IMR-90 (cell line): ENCODE measurements at regions of chr2 and their contacts with region 1.

Region 1: GRCh38 chr2:197705121-197705911 is at the start of gene MARS2:
- DNase-seq: peak; percentile 88
- ATAC-seq: peak; percentile 95
- H3K4me3 ChIP-seq: peak within 1 kb of the TSS; percentile 99
- H3K27ac ChIP-seq: peak within 1 kb of the TSS; percentile 49
- H3K4me1 ChIP-seq: peaks cover 6% of the 10 kb centered on the region
- H3K27me3 ChIP-seq: no peaks in the 10 kb centered on the region
- CTCF ChIP-seq: no peak
- POLR2A ChIP-seq: no peak
- RAD21 ChIP-seq: no peak
- total RNA-seq, gene MARS2: 3.8 and 3.9 TPM in 2 replicates

Region 2: GRCh38 chr2:197124639-197125390 is 580.5 kb before region 1 on chr2:
- CTCF ChIA-PET with region 1: no interaction called
- POLR2A ChIA-PET with region 1: no interaction called
- dilution Hi-C with region 1: no loop called
- in situ Hi-C with region 1: no loop called
- intact Hi-C with region 1: loop called (anchors 10 kb)
- DNase-seq: peak; percentile 92
- ATAC-seq: peak; percentile 94
- H3K4me3 ChIP-seq: no peak overlapping the region
- H3K27ac ChIP-seq: peak overlapping the region; percentile 71
- H3K4me1 ChIP-seq: peaks cover 13% of the 10 kb centered on the region
- H3K27me3 ChIP-seq: no peaks in the 10 kb centered on the region
- CTCF ChIP-seq: no peak
- POLR2A ChIP-seq: no peak
- RAD21 ChIP-seq: 0 out of 2 replicates have a peak, but pooled peaks have one; percentile 11

Region 3: GRCh38 chr2:197434541-197435513 is 270.5 kb before region 1 on chr2 and contains the start of gene SF3B1:
- CTCF ChIA-PET with region 1: no interaction called
- POLR2A ChIA-PET with region 1: no interaction called
- dilution Hi-C with region 1: no loop called
- in situ Hi-C with region 1: no loop called
- intact Hi-C with region 1: loop called (anchors 10 kb)
- DNase-seq: peak; percentile 98
- ATAC-seq: peak; percentile 94
- H3K4me3 ChIP-seq: peak within 1 kb of the TSS; percentile 90
- H3K27ac ChIP-seq: peak within 1 kb of the TSS; percentile 97
- H3K4me1 ChIP-seq: peaks cover 7% of the 10 kb centered on the region
- H3K27me3 ChIP-seq: no peaks in the 10 kb centered on the region
- CTCF ChIP-seq: no peak
- POLR2A ChIP-seq: peak; percentile 97
- RAD21 ChIP-seq: no peak
- total RNA-seq, gene SF3B1: 706 and 942 TPM in 2 replicates

Region 4: GRCh38 chr2:197499594-197500526 is 205.5 kb before region 1 on chr2 and contains the starts of genes HSPD1 and HSPE1:
- CTCF ChIA-PET with region 1: no interaction called
- POLR2A ChIA-PET with region 1: no interaction called
- dilution Hi-C with region 1: no loop called
- in situ Hi-C with region 1: no loop called
- intact Hi-C with region 1: loop called (anchors 1 kb)
- DNase-seq: peak; percentile 99
- ATAC-seq: peak; percentile 94
- H3K4me3 ChIP-seq: peak within 1 kb of the TSS; percentile 74
- H3K27ac ChIP-seq: peak within 1 kb of the TSS; percentile 74
- H3K4me1 ChIP-seq: 0 out of 2 replicates have a peak, but pooled peaks cover 1% of the 10 kb centered on the region
- H3K27me3 ChIP-seq: no peaks in the 10 kb centered on the region
- CTCF ChIP-seq: no peak
- POLR2A ChIP-seq: peak; percentile 71
- RAD21 ChIP-seq: no peak
- total RNA-seq, gene HSPD1: 171 and 374 TPM in 2 replicates
- total RNA-seq, gene HSPE1: 13.3 and 60.3 TPM in 2 replicates

Region 5: GRCh38 chr2:197515739-197516392 is 189.4 kb before region 1 on chr2 and contains the start of gene MOB4:
- CTCF ChIA-PET with region 1: no interaction called
- POLR2A ChIA-PET with region 1: no interaction called
- dilution Hi-C with region 1: no loop called
- in situ Hi-C with region 1: loop called (anchors 10 kb)
- intact Hi-C with region 1: loop called (anchors 5 kb)
- DNase-seq: peak; percentile 93
- ATAC-seq: peak; percentile 99
- H3K4me3 ChIP-seq: peak within 1 kb of the TSS; percentile 80
- H3K27ac ChIP-seq: peak within 1 kb of the TSS; percentile 93
- H3K4me1 ChIP-seq: peaks cover 4% of the 10 kb centered on the region; the same call in 1 of the 2 replicates
- H3K27me3 ChIP-seq: no peaks in the 10 kb centered on the region
- CTCF ChIP-seq: no peak
- POLR2A ChIP-seq: peak; percentile 88
- RAD21 ChIP-seq: no peak
- total RNA-seq, gene MOB4: 34.8 and 69.4 TPM in 2 replicates

Region 6: DNA sequence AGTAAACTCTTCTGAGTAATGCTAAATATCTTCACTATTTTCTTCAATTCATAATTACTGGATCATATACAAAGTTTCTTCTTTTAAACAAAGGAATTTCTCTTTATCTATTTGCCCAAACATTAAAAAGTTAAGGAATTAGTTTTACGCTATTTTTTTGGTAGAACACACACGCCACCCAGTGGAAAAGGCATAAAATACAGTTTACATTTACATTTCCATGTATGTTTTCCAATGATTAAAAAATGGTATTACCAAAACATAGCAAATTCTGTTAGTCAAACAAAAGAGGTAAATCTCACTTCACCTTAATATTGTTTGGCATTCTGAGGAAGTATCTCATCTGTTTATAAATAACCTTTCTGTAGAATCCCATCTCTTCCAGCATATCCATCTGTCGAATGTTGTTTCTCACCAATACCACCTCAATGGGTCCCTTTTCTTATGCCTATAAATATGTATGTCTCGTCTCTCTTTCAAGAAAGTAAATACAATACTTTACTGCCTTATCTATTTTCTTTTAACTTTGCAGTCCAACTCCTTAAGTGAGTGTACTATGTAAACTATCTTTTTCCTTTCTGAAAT is 72.6 kb after region 1 on chr2:
- CTCF ChIA-PET with region 1: interaction called, 3 read pairs
- POLR2A ChIA-PET with region 1: no interaction called
- dilution Hi-C with region 1: no loop called
- in situ Hi-C with region 1: no loop called
- intact Hi-C with region 1: loop called (anchors 1 kb)
- DNase-seq: peak; percentile 51
- ATAC-seq: peak; percentile 63
- H3K4me3 ChIP-seq: no peak overlapping the region
- H3K27ac ChIP-seq: no peak overlapping the region
- H3K4me1 ChIP-seq: no peaks in the 10 kb centered on the region
- H3K27me3 ChIP-seq: no peaks in the 10 kb centered on the region
- CTCF ChIP-seq: peak; percentile 79
- POLR2A ChIP-seq: no peak
- RAD21 ChIP-seq: peak; percentile 80

Region 7: DNA sequence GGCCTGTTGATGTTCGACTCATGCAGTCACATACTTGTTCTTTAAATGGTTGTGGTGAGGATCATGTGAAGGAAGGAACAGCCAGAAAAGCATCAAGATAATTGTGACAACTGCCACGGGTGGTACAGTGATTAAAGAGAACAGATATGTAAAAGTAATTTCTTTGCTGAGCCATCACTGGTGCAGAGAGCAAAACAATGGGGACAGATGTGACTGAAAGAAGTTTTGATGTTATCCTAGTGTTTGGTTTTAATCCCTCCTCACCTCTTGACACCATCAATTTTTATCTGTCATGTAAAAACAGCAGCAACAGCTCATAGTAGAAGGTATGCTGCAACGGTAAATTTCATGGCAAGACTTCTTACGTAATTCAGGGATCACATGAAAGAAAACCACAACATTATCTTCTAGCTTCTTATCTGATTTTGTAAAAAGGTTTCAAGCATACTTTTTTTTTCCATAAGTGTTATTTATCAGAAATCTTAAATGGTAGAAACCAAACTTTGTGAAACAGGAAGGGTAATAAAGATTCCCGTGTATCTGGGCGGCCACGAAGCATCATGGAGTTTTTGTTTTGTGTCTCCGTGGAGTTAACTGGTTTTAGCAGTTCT is 164.3 kb after region 1 on chr2:
- CTCF ChIA-PET with region 1: no interaction called
- POLR2A ChIA-PET with region 1: no interaction called
- dilution Hi-C with region 1: no loop called
- in situ Hi-C with region 1: no loop called
- intact Hi-C with region 1: no loop called
- DNase-seq: no peak
- ATAC-seq: no peak
- H3K4me3 ChIP-seq: no peak overlapping the region
- H3K27ac ChIP-seq: no peak overlapping the region
- H3K4me1 ChIP-seq: peaks cover 3% of the 10 kb centered on the region
- H3K27me3 ChIP-seq: no peaks in the 10 kb centered on the region
- CTCF ChIP-seq: no peak
- POLR2A ChIP-seq: no peak
- RAD21 ChIP-seq: no peak

Region 8: DNA sequence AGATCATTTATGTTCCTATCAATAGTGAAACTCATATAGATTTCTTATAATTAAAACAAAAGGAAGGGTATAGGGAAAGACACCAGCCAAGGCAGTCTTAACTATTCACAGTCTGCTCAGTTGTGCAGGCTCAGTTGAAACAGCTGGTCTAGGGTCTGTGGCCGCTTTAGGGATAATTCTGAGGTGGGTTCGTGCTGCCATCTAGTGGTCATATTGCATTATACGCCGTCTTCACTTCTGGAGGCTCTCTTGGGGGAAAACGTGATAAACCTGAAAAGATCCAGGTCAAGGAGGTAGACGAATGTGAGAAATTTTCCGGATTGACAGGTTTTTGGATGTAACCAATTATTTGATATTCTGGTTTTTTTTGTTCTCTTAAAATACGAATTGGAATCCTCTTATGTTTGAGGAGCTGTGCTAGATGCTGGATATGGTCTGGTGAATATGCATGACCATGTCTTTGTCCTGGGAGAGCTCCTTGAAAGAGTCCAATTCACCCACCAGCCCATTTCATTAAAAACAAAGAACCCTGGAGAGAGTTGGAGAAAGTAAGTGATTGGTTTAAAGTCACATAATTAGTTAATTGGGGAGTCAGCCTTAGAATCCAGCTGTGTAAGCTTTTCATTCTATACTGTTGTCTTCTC is 591.5 kb after region 1 on chr2:
- CTCF ChIA-PET with region 1: no interaction called
- POLR2A ChIA-PET with region 1: no interaction called
- dilution Hi-C with region 1: no loop called
- in situ Hi-C with region 1: no loop called
- intact Hi-C with region 1: loop called (anchors 5 kb)
- DNase-seq: peak; percentile 40
- ATAC-seq: peak; percentile 92
- H3K4me3 ChIP-seq: no peak overlapping the region
- H3K27ac ChIP-seq: no peak overlapping the region
- H3K4me1 ChIP-seq: no peaks in the 10 kb centered on the region
- H3K27me3 ChIP-seq: peaks cover 1% of the 10 kb centered on the region; the same call in 1 of the 2 replicates
- CTCF ChIP-seq: peak; percentile 63
- POLR2A ChIP-seq: no peak
- RAD21 ChIP-seq: peak; percentile 67